ENCODE measurements at regions of chr15 and their contacts with region 1.

Region 1: GRCh38 chr15:94335616-94336015 is 104.3 kb downstream of the MCTP2 start:
- DNase-seq: no peak
- H3K4me3 ChIP-seq: no peak overlapping the region
- H3K27ac ChIP-seq: no peak overlapping the region
- H3K4me1 ChIP-seq: no peaks in the 10 kb centered on the region
- CTCF ChIP-seq: no peak

Region 2: GRCh38 chr15:93942269-93942694 is 393.3 kb before region 1 on chr15:
- CTCF ChIA-PET with region 1: no interaction called
- POLR2A ChIA-PET with region 1: no interaction called
- intact Hi-C with region 1: no loop called
- DNase-seq: no peak
- H3K4me3 ChIP-seq: no peak overlapping the region
- H3K27ac ChIP-seq: no peak overlapping the region
- H3K4me1 ChIP-seq: no peaks in the 10 kb centered on the region
- CTCF ChIP-seq: no peak

Region 3: DNA sequence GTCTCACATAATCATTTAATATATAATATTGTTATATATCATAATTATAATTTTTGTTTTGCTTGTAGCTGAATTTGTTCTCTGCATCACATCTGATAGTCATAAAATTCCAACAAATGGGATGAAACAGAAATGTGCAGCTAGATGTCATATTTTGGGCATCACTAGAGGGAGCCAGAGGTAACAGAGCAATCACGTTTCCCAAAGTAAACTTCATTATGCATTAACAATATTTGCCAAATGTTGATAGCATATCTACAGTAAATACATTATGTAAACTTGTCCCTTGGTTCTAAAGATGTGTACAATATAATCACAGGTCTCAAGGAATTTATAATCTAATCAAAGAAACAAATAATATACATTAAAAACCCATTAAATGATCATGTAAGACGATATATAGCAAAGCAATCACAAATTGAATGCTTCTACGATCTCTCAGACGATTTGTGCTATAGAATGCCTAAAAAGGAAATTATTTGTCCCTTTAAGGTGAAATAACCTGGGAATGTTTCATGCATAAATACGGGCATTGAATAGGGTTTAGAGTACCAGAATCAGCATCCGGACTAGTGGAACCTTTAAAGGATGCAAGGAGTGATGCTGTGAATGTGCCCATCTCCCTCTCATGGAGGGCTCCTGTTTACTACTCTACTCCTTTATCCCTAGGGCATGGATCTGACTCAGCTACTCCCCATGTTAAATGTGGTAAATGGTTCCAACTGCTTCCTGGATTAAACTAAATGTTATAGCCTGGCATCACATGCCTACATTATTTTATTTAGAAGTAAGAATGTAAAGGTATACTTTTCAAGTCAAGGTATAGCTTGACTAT is 338.3 kb before region 1 on chr15:
- CTCF ChIA-PET with region 1: no interaction called
- POLR2A ChIA-PET with region 1: no interaction called
- intact Hi-C with region 1: loop called (anchors 5 kb)
- DNase-seq: peak; percentile 21
- H3K4me3 ChIP-seq: no peak overlapping the region
- H3K27ac ChIP-seq: no peak overlapping the region
- H3K4me1 ChIP-seq: no peaks in the 10 kb centered on the region
- CTCF ChIP-seq: peak; percentile 91

Region 4: GRCh38 chr15:94441760-94442159 is 106.1 kb after region 1 on chr15:
- CTCF ChIA-PET with region 1: no interaction called
- POLR2A ChIA-PET with region 1: interaction called, 10 read pairs
- intact Hi-C with region 1: no loop called
- DNase-seq: no peak
- H3K4me3 ChIP-seq: no peak overlapping the region
- H3K27ac ChIP-seq: no peak overlapping the region
- H3K4me1 ChIP-seq: no peaks in the 10 kb centered on the region
- CTCF ChIP-seq: no peak

Region 5: DNA sequence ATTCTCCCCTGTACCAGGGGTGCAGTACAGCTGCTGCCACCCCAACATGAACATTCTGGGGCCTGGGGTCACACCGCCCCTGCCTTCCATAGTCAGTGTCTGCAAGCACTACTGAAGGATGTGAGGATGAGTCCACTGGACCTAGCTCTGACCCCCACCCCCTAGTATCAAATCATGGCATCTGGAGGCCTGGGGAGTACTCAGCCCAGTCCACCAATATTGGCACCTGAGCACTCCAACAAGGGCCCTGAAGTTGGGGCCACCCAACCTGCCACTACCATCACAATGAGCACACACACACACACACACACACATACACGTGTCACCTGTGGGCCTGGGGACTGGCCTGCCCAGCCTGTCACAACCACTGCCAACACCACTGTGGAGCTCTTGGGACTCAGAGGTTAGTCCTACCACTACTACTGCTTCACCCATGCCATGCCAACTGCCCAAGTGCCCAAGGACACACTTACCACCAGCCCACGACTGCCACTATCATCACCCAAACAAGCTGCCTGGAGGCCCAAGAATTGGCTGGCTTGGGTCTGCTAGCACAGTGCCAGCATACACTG is 149.6 kb after region 1 on chr15:
- CTCF ChIA-PET with region 1: no interaction called
- POLR2A ChIA-PET with region 1: interaction called, 11 read pairs
- intact Hi-C with region 1: no loop called
- DNase-seq: no peak
- H3K4me3 ChIP-seq: no peak overlapping the region
- H3K27ac ChIP-seq: no peak overlapping the region
- H3K4me1 ChIP-seq: peaks cover under 1% of the 10 kb centered on the region
- CTCF ChIP-seq: no peak

Measured in OCI-LY7 (cell line).